ENCODE measurements at regions of chr21 and their contacts with region 1.

Region 1: GRCh38 chr21:44279354-44280260 is 6.1 kb upstream of the AIRE start:
- DNase-seq: no peak
- H3K4me3 ChIP-seq: no peak overlapping the region
- H3K27ac ChIP-seq: no peak overlapping the region
- H3K4me1 ChIP-seq: no peaks in the 10 kb centered on the region
- H3K27me3 ChIP-seq: no peaks in the 10 kb centered on the region
- CTCF ChIP-seq: no peak
- EP300 ChIP-seq: no peak
- POLR2A ChIP-seq: no peak

Region 2: GRCh38 chr21:43868461-43868860 is 411.1 kb before region 1 on chr21:
- intact Hi-C with region 1: no loop called
- DNase-seq: no peak
- H3K4me3 ChIP-seq: no peak overlapping the region
- H3K27ac ChIP-seq: no peak overlapping the region
- H3K4me1 ChIP-seq: peaks cover 9% of the 10 kb centered on the region
- H3K27me3 ChIP-seq: no peaks in the 10 kb centered on the region
- CTCF ChIP-seq: no peak
- EP300 ChIP-seq: no peak
- POLR2A ChIP-seq: no peak

Region 3: DNA sequence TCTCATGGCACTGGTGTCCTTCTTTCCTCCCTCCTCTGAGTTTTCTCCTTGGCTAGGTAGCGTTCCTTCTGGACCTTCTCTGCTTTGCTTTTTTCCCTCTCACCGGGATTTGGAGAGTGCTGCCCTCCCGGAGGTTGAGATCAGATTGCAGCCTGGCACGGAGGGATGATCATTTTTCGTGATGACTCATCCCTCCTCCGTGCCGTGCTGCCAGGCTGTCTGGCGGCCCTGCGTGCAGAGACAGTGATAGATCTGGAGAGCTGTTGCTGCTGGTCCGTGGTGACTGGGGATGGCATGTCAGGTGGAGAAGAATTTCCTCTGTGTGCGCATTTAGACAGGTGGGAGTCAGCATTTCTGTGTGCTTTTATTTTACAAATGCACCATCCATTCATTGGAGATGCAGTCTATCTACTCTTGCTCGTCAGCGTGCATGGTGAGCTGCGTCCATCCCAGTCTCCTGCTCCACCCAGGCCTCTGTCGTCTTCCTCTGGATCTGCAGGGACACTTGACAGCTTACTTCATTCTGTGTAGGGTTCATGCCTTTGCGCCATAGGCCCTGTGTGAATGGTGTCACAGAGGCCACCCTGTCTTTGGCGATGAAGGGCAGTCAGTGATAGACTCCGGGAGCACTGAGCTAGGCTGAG is 1468.3 kb after region 1 on chr21:
- intact Hi-C with region 1: loop called in 1 of 4 experiments (anchors 10 kb)
- DNase-seq: no peak
- H3K4me3 ChIP-seq: no peak overlapping the region
- H3K27ac ChIP-seq: no peak overlapping the region
- H3K4me1 ChIP-seq: no peaks in the 10 kb centered on the region
- H3K27me3 ChIP-seq: no peaks in the 10 kb centered on the region
- CTCF ChIP-seq: no peak
- EP300 ChIP-seq: no peak
- POLR2A ChIP-seq: no peak